Posterior cingulate gyrus (tissue), 11 donors: ENCODE measurements at regions of chr4 and their contacts with region 1.

Region 1: DNA sequence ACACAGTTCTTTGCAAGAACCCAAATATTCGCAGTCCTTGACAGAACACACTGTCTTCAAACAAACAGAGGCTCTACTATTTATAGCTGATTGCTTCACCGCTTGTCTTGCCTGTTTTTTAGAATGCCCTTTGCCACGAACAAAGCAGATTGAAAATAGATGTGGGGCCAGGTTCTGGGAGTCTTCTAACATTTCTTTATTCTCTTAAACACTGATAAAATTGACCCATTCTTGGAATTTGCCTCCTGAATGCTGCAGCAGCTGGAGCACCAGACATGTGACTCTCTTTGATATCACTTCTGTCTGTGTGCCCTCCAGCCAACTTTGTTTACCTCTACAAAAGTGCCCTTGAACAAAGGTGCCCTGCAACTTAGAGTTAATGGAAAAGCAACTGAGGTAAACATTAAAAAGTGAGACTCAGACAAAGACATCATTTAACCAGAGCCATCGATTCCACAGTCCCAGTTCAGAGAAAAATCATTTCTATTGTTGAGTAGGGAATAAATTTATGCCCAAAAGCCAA is 64.2 kb upstream of the SPP1 start:
- DNase-seq: no peak

Region 2: DNA sequence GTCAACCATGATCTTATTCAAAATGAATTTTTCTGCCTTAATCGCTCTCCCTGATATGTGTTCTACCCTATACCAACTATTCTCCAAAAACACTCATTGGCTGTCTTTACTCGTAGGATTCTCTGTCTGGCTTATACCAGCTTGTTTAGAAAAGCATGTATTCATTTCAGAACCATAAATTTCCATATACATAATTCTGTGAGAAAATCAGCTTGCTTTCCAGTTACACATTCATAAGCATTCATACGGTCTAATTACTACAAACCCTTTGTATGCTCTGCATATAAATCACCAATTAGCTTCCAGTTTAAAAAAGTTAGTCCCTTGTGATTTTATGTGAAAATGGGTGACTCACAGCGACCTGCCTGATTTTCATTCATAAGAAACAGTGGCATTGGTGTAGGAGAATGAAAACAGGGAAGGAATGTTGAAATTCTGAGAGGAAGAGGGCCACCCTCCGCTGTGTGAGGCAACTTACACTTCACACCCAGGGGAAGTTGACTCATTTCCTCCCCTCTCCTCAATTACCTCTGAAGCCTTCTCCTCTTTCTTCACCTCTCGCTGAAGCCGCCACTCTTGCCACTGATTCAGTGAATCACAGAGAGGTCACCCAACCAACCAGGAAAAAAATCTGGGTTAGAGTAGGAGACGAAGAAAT is 15.2 kb before region 1 on chr4:
- intact Hi-C with region 1: no loop called
- DNase-seq: peak in 1 of 10 donors; percentile 17

Region 3: GRCh38 chr4:87973283-87974169 is 62.2 kb after region 1 on chr4:
- intact Hi-C with region 1: loop called (anchors 5 kb)
- DNase-seq: peak in 8 of 10 donors; percentile 41 to 90 (median 75)

Region 4: DNA sequence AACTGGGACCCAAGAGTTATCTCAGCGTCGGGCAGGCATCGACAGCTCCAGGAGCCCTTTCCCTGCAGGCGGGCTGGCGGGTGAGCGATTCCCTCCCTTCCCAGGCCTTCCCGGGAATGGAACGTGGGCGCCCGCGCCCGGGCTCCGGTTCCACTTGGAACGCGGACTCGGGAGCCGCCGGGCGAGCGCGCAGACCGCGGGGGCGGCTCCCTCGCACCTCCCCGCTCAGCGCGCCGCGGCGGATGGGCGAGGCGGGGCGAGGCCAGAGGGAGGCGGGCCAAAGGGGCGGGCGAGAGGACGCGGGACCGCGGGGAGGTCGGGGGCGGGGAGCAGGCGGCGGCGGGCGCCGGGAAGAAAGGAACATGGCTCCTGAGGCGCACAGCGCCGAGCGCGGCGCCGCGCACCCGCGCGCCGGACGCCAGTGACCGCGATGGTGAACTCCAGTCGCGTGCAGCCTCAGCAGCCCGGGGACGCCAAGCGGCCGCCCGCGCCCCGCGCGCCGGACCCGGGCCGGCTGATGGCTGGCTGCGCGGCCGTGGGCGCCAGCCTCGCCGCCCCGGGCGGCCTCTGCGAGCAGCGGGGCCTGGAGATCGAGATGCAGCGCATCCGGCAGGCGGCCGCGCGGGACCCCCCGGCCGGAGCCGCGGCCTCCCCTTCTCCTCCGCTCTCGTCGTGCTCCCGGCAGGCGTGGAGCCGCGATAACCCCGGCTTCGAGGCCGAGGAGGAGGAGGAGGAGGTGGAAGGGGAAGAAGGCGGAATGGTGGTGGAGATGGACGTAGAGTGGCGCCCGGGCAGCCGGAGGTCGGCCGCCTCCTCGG is 96.2 kb after region 1 on chr4 and contains the start of gene PKD2:
- intact Hi-C with region 1: no loop called
- DNase-seq: peak; percentile 82 to 98 (median 88)

Region 5: GRCh38 chr4:88166608-88167007 is 255.3 kb after region 1 on chr4:
- intact Hi-C with region 1: no loop called
- DNase-seq: no peak